ENCODE measurements at regions of chr7 and their contacts with region 1.

Region 1: GRCh38 chr7:152313831-152314604 is 121.8 kb downstream of the KMT2C start:
- DNase-seq: peak; percentile 33 to 91
- H3K4me3 ChIP-seq: no peak overlapping the region
- H3K27ac ChIP-seq: peak overlapping the region; percentile 59
- H3K4me1 ChIP-seq: peaks cover 20% of the 10 kb centered on the region
- H3K27me3 ChIP-seq: no peaks in the 10 kb centered on the region
- CTCF ChIP-seq: no peak

Region 2: DNA sequence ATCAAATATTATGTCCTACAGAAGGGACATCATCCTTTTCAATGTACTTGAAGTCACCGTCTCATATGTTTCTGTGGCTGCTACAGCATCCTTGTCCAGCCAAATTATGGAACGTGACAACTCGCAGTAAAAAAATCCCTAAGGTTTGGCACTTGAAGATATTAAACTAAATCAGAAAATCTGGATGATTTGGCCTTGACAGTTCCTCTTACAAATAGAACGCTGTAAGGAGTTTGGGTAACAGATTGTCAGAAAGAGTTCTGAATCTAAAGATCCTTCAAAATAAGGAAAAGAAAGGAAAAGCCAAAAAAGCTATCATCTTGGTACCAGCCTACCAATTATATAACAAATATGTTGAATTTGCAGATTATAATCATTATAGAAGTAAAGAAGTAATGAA is 341.0 kb after region 1 on chr7:
- CTCF ChIA-PET with region 1: no interaction called
- POLR2A ChIA-PET with region 1: interaction called, 11 read pairs
- intact Hi-C with region 1: no loop called
- DNase-seq: no peak
- H3K4me3 ChIP-seq: no peak overlapping the region
- H3K27ac ChIP-seq: no peak overlapping the region
- H3K4me1 ChIP-seq: no peaks in the 10 kb centered on the region
- H3K27me3 ChIP-seq: no peaks in the 10 kb centered on the region
- CTCF ChIP-seq: no peak